Esophagus muscularis mucosa (tissue), 4 donors: ENCODE measurements at regions of chr18 and their contacts with region 1.

Region 1: GRCh38 chr18:23900994-23901393 is 113.6 kb upstream of the TTC39C start:
- DNase-seq: peak; percentile 80
- H3K4me3 ChIP-seq: no peak overlapping the region
- H3K27ac ChIP-seq: no peak overlapping the region
- H3K4me1 ChIP-seq: no peaks in the 10 kb centered on the region
- H3K27me3 ChIP-seq: no peaks in the 10 kb centered on the region
- CTCF ChIP-seq: no peak
- EP300 ChIP-seq: no peak
- POLR2A ChIP-seq: no peak

Region 2: DNA sequence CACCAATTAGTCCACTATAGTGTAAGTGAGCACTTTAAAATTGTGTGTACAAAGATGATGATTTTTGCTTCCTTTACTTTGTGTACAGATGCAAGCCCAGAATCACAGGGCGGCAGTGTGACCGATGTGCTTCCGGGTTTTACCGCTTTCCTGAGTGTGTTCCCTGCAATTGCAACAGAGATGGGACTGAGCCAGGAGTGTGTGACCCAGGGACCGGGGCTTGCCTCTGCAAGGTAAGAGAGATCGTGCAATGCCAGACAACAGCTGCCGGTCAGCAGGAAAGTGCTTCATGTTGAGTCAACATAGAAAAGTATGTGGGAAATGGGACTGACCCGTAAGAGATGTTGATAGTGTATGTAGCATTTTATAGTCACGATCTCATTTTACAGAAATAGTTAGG is 43.2 kb before region 1 on chr18:
- intact Hi-C with region 1: loop called (anchors 5 kb)
- DNase-seq: no peak
- H3K4me3 ChIP-seq: no peak overlapping the region
- H3K27ac ChIP-seq: no peak overlapping the region
- H3K4me1 ChIP-seq: no peaks in the 10 kb centered on the region
- H3K27me3 ChIP-seq: no peaks in the 10 kb centered on the region
- CTCF ChIP-seq: no peak
- EP300 ChIP-seq: no peak
- POLR2A ChIP-seq: no peak

Region 3: DNA sequence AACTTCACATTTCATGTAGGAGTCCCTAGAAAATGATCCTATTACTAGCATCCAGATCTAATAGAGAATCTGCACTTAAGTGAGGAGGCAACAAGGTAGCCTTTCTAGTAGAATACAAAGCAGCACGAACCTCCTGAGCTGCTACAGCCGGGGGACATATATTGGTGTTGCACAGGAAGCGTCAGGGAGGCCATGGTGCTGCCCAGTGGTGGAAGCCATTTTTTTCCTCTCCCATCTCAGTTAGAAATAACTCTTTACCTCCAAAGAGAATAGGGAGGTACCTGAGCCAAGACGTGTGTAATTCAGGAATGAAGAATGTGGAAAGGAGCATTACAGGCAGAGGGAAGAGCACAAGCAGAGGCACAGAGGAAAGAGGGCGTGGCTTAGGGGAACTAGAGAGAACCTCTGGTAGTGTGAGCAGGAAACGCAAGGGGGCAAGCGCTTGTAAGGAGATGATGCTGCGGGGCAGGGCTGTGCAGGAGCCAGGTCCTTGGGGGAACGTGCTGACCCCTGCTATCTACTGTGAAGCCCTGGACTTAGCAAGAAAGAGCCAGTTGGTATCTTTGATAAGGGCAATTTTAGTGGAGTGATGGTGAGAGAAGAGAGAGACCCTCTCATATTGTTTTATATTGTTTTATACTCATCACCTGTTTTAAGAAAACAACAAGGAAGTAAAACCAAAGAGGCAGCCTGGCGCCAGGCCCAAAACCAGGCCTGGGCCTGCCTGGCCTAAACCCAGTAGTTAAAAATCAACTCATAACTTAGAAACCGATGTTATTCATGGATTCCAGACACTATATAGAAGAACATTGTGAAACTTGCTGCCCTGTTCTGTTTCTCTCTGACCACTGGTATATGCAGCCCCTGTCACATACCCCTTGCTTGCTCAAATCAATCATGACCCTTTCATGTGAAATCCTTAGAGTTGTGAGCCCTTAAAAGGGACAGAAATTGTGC is 63.6 kb after region 1 on chr18:
- intact Hi-C with region 1: no loop called
- DNase-seq: peak; percentile 50
- H3K4me3 ChIP-seq: no peak overlapping the region
- H3K27ac ChIP-seq: peak overlapping the region; percentile 57 to 75 (median 66)
- H3K4me1 ChIP-seq: peaks cover 0 to 40% (median 32%) of the 10 kb centered on the region in 4 donors
- H3K27me3 ChIP-seq: no peaks in the 10 kb centered on the region
- CTCF ChIP-seq: no peak
- EP300 ChIP-seq: no peak
- POLR2A ChIP-seq: no peak